H1 (cell line): ENCODE measurements at regions of chr1 and their contacts with region 1.

Region 1: DNA sequence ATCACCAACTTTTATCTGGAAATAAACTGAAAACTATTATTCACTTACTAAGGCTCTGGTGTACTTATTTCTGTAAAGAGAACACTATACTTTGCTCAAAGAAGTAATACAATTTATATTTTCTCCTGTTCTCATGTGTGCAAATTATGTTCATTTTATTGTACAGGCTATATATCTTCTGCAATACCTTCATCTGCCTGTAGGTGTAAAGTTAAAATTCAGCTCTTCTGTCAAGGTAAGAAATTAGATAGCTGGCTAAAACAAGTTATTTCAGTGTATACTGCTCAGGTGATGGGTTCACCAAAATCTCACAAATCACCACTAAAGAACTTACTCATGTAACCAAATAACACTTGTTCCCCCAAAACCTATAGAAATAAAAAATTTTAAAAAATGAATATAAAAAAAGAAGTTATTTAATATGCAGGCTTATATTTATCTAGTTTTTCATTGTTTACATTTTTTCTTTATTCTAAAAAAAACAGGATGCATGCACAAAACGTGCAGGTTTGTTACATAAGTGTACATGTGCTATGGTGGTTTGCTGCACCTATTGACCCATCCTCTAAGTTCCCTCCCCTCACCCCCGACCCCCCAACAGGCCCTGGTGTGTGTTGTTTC is 81.5 kb downstream of the PTGER3 start:
- DNase-seq: no peak
- H3K4me3 ChIP-seq: no peak overlapping the region
- H3K27ac ChIP-seq: no peak overlapping the region
- H3K4me1 ChIP-seq: no peaks in the 10 kb centered on the region
- H3K27me3 ChIP-seq: no peaks in the 10 kb centered on the region
- CTCF ChIP-seq: peak in 1 of 3 experiments; percentile 16; a peak in 1 of 4 replicates
- EP300 ChIP-seq: no peak
- POLR2A ChIP-seq: no peak
- RAD21 ChIP-seq: no peak

Region 2: GRCh38 chr1:70948396-70949017 is 17.6 kb before region 1 on chr1:
- CTCF ChIA-PET with region 1: interaction called, 14 read pairs
- POLR2A ChIA-PET with region 1: no interaction called
- DNase-seq: no peak
- H3K4me3 ChIP-seq: no peak overlapping the region
- H3K27ac ChIP-seq: no peak overlapping the region
- H3K4me1 ChIP-seq: no peaks in the 10 kb centered on the region
- H3K27me3 ChIP-seq: no peaks in the 10 kb centered on the region
- CTCF ChIP-seq: no peak
- EP300 ChIP-seq: no peak
- POLR2A ChIP-seq: no peak
- RAD21 ChIP-seq: no peak

Region 3: GRCh38 chr1:70978623-70979022 is 12.5 kb after region 1 on chr1:
- CTCF ChIA-PET with region 1: interaction called, 44 read pairs
- POLR2A ChIA-PET with region 1: no interaction called
- DNase-seq: no peak
- H3K4me3 ChIP-seq: no peak overlapping the region
- H3K27ac ChIP-seq: no peak overlapping the region
- H3K4me1 ChIP-seq: no peaks in the 10 kb centered on the region
- H3K27me3 ChIP-seq: no peaks in the 10 kb centered on the region
- CTCF ChIP-seq: no peak
- EP300 ChIP-seq: no peak
- POLR2A ChIP-seq: no peak
- RAD21 ChIP-seq: no peak

Region 4: DNA sequence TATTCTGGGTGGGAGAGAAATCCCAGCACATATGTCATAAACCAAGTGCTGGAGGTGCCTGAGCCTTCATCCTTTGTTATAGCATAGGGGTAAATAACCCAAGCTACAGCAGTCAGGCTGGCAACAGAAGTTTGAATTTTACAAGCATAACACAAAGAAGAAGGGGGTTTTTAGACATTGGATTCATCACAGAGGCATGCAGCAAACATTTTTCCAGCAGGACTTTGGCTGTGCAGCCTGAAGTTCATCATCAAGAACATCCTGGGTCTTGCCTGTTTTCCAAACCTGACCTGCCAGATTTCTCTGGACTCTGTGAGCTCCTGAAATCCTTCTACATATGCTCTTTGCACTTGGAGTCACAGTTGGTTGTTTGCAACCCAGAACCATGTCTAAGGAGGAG is 65.3 kb after region 1 on chr1:
- CTCF ChIA-PET with region 1: no interaction called
- POLR2A ChIA-PET with region 1: no interaction called
- DNase-seq: no peak
- H3K4me3 ChIP-seq: no peak overlapping the region
- H3K27ac ChIP-seq: no peak overlapping the region
- H3K4me1 ChIP-seq: no peaks in the 10 kb centered on the region
- H3K27me3 ChIP-seq: no peaks in the 10 kb centered on the region
- CTCF ChIP-seq: no peak
- EP300 ChIP-seq: no peak
- POLR2A ChIP-seq: no peak
- RAD21 ChIP-seq: no peak